ENCODE measurements at regions of chr12 and their contacts with region 1.

Region 1: GRCh38 chr12:12562585-12563261 is at the start of gene DUSP16:
- DNase-seq: peak; percentile 66
- H3K4me3 ChIP-seq: peak within 1 kb of the TSS; percentile 74
- CTCF ChIP-seq: peak; percentile 22

Region 2: DNA sequence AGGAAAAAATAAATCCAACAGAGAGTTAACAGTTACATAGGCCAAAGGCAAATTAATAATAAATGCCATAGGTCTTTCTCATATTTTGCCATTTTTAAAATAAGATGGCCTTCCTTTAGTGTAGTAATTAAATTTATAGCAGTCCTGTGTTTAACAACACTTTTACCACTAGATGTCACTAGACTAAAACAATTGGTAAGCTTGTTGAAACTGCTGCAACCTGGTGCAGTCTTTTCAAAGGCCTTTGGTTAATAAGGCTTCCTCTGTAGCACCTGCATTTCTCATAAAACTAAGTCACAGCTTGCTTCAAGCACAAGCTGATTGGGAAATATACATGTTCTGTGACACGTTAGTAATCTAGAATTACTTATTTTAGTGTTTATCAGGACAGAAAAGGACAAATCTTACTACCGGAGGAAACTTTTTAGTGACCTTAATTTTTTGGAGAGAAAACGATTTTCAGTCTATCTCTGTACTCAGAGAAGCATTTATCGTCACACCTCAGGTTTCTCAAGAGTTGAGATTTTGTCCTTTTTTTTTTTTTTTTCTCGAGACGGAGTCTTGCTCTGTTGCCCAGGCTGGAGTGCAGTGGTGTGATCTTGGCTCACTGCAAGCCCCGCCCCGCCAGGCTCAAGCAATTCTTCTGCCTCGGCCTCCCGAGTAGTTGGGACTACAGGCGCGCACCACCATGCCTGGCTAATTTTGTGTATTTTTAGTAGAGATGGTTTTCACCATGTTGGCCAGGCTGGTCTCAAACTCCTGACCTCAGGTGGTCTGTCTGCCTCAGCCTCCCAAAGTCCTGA is 185.9 kb before region 1 on chr12:
- CTCF ChIA-PET with region 1: interaction called, 81 read pairs
- POLR2A ChIA-PET with region 1: interaction called, 10 read pairs
- DNase-seq: peak; percentile 52
- H3K4me3 ChIP-seq: no peak overlapping the region
- CTCF ChIP-seq: peak; percentile 43

Region 3: DNA sequence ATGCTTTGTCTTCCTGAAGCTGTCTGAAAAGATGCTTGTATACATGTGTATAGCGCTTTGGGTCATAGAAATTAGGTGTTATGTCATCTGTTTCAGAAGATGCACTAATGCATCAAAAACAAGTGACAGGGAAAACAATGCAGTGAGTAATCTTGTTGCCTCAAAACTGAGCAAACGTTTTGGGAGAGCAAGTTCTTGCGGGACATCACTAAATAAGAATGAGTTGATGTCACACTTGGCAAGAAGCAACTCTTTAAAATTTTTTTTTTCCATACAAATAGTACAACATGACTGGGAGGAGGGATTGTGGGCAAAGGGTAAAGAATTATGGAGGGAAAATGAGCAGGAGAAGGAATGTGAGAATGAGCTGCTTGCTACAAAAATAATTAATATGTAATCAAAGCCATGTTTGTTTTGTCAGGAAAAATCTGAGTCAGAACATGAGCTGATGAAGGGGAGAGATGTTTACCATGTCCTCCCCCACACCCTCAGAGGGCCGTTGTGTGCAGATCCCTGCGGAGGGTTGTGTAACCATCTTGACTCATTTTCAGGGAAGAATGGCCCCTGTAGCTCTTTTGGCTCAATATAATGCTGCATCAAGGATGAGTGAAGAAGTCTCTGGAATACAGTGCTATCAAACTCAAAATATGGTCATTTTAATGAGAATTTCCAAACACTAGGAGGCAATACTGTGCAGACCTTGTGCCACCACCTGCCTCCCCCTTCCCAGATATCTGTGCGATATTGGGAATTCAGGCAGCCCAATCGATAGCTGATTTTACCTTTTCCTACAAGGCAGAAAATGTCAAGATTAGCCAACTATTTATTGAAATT is 164.5 kb before region 1 on chr12:
- CTCF ChIA-PET with region 1: interaction called, 12 read pairs
- POLR2A ChIA-PET with region 1: no interaction called
- DNase-seq: peak; percentile 84
- H3K4me3 ChIP-seq: no peak overlapping the region
- CTCF ChIP-seq: no peak

Region 4: DNA sequence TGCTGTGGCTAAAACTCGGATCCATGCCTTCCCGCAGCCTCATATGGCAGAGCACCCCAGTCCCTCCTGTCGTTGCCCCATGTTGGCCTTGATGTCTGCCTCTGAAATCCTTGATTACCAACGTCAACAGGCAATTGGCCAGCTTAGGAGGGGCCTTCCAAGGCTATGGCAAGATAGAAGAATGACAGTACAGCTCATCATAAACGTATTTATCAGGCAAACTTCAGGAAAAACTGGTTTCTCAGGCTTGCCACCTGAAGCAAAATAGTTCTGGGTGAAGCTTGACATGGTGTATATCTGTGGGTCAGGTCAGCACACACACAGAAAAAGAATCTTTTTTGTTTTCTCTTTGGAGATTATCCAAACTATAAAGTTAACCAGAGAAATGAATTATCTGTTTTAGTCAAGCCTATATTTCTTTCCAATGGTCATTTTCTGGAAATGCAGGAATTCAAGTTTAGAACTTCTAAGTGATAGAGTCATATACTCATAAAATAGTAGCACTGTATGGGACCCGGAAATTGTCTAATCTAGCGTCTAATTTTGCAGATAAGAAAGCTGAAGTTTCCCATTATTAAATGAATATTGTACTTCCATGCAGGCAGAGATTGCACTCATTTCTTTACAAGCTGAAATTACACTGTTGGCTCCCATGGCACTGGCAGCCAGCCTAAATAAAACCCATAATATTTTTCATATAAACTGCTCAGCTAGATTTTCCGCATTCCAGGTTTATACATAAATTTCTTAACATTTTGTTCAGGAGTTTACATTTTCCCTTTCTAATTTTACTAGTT is 24.4 kb after region 1 on chr12:
- CTCF ChIA-PET with region 1: interaction called, 12 read pairs
- POLR2A ChIA-PET with region 1: no interaction called
- DNase-seq: no peak
- H3K4me3 ChIP-seq: no peak overlapping the region
- CTCF ChIP-seq: no peak

Region 5: GRCh38 chr12:12600255-12601034 is 37.7 kb after region 1 on chr12:
- CTCF ChIA-PET with region 1: interaction called, 20 read pairs
- POLR2A ChIA-PET with region 1: no interaction called
- DNase-seq: no peak
- H3K4me3 ChIP-seq: no peak overlapping the region
- CTCF ChIP-seq: no peak

Region 6: GRCh38 chr12:12684375-12685106 is 121.8 kb after region 1 on chr12:
- CTCF ChIA-PET with region 1: no interaction called
- POLR2A ChIA-PET with region 1: no interaction called
- DNase-seq: no peak
- H3K4me3 ChIP-seq: no peak overlapping the region
- CTCF ChIP-seq: no peak